ENCODE measurements at regions of chr9 and their contacts with region 1.

Region 1: DNA sequence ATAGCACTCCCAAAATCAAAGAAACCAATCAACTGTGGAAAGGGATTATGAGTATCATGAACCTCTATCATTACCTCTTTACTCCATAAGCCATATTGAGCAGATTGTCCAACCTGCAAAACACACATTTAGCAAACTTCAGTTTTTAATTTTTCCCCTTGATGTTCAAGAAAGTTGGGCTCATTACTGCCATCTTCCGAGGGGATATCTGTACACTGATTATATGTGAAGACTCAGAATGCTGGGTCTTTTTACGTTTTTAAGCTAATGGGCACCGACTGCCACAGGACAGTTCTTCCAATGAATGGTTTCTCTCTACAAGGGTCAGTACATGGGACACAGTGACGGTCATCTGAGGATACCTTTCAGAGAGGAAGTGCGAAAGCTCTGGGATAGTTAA is 132.7 kb downstream of the ELAVL2 start:
- DNase-seq: no peak
- ATAC-seq: no peak

Region 2: GRCh38 chr9:23638837-23639426 is 54.4 kb before region 1 on chr9:
- intact Hi-C with region 1: loop called in 1 of 2 experiments (anchors 10 kb)
- DNase-seq: no peak
- ATAC-seq: no peak

Region 3: GRCh38 chr9:23766613-23767012 is 73.2 kb after region 1 on chr9:
- intact Hi-C with region 1: no loop called
- DNase-seq: no peak
- ATAC-seq: peak; percentile 49

Region 4: DNA sequence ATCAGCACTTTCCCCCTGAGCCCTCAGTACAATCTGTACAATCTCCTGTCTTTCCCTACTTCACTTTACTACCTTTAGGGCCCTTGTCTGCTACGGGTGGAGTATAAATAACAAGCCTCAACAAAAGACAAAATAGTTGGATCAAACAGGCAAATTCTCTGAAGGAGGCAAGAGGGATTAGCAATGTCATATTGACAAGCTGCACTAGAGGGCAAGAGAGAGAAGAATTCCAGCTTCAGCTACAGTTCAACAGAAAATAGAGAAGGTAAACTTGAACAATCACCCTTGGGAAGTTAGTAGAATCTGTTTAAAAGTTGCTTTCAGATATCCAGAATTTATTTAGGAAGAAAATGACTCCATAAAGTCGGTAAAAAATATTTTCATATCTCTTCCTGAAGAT is 920.7 kb after region 1 on chr9:
- intact Hi-C with region 1: no loop called
- DNase-seq: no peak
- ATAC-seq: no peak